ENCODE measurements at regions of chr7 and their contacts with region 1.

Region 1: DNA sequence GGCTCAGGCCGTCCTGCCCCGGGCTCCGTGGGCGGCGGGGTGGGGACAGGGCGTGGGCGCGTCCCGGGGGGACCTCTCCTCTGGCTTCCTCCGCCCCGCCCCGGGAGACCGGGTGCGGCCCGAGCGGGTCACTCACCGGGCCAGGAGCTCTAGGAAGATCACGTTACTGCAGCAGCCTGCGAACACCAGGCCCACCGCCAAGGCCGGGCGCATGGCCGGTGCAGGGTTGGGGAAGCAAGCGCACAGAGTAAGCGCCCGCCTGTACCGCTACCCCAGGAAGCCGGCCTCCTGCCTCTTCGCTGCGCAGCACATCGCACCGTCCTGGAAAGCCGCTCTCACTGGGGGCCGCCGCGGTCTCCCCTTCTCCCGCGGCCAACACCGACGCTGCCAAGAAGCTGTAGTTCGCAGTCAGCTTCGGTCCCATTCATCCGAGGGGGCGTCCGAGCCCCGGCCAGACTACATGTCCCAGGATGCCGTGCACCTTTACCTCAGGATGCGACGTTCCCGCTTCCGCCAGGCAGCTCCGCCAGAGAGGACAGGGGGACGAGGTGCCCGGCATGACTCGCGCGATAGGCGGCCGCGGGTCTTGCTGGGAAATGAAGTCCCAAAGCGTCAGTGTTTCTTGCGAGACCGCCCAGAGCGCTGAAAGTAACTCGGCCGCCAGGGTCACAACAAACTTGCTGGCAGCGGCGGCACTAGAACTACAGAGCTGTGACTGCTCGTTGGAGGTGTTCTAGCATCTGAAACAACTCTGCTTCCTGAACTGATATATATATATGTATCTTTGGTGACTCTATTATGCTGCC is at the start of gene SLC35B4:
- DNase-seq: peak; percentile 88 to 97 (median 94)
- ATAC-seq: peak; percentile 97
- H3K4me3 ChIP-seq: peak within 1 kb of the TSS; percentile 88 to 98
- H3K4me3 Mint-ChIP-seq: peak within 1 kb of the TSS; percentile 97
- H3K27ac ChIP-seq: peak within 1 kb of the TSS; percentile 58 to 72
- H3K27ac Mint-ChIP-seq: peak within 1 kb of the TSS; percentile 92
- H3K4me1 ChIP-seq: peaks cover 14% of the 10 kb centered on the region
- H3K4me1 Mint-ChIP-seq: peaks cover 25% of the 10 kb centered on the region
- H3K27me3 ChIP-seq: no peaks in the 10 kb centered on the region
- H3K27me3 Mint-ChIP-seq: peaks cover 3% of the 10 kb centered on the region
- CTCF ChIP-seq: peak; percentile 29
- total RNA-seq, gene SLC35B4: 5.1 to 7.0 TPM

Region 2: DNA sequence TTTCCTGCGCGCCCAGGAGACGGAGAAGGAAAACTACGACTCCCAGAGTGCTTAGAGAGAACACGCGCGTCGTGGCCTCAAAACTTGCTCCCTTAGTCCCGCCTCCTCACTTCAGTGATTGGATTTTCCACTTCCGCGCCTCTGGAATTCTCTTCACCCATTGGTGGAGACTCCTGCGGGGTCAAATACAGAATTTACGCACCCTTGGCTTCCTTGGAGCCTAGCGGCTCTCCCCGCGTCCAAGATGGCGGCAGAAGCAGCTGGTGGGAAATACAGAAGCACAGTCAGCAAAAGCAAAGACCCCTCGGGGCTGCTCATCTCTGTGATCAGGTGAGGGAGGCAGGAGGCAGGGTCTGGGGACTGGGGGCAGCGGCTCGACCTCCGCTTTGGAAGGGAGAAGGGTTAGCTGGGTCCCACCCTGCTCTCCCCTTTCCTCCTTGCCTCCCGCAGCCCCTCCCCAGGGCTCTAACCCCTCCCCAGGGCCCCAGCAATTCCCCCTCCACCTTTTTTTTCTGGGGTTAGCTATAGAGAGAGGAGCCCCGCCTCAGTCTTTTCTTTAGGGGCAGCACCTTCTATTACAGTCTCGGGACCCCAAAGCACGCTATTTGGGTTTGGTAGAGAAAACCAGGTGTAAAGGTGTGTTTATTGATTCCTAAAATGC is 1063.8 kb before region 1 on chr7 and contains the start of gene EXOC4:
- CTCF ChIA-PET with region 1: no interaction called
- POLR2A ChIA-PET with region 1: interaction called, 5 read pairs
- intact Hi-C with region 1: loop called (anchors 1 to 2 kb)
- DNase-seq: peak; percentile 82 to 98 (median 89)
- ATAC-seq: peak; percentile 99
- H3K4me3 ChIP-seq: peak within 1 kb of the TSS; percentile 88
- H3K4me3 Mint-ChIP-seq: peak within 1 kb of the TSS; percentile 96
- H3K27ac ChIP-seq: peak within 1 kb of the TSS; percentile 83 to 92
- H3K27ac Mint-ChIP-seq: peak within 1 kb of the TSS; percentile 96
- H3K4me1 ChIP-seq: peaks cover 15% of the 10 kb centered on the region
- H3K4me1 Mint-ChIP-seq: peaks cover 44% of the 10 kb centered on the region
- H3K27me3 ChIP-seq: no peaks in the 10 kb centered on the region
- H3K27me3 Mint-ChIP-seq: no peaks in the 10 kb centered on the region
- CTCF ChIP-seq: no peak
- total RNA-seq, gene EXOC4: 47.9 to 50.5 TPM

Region 3: DNA sequence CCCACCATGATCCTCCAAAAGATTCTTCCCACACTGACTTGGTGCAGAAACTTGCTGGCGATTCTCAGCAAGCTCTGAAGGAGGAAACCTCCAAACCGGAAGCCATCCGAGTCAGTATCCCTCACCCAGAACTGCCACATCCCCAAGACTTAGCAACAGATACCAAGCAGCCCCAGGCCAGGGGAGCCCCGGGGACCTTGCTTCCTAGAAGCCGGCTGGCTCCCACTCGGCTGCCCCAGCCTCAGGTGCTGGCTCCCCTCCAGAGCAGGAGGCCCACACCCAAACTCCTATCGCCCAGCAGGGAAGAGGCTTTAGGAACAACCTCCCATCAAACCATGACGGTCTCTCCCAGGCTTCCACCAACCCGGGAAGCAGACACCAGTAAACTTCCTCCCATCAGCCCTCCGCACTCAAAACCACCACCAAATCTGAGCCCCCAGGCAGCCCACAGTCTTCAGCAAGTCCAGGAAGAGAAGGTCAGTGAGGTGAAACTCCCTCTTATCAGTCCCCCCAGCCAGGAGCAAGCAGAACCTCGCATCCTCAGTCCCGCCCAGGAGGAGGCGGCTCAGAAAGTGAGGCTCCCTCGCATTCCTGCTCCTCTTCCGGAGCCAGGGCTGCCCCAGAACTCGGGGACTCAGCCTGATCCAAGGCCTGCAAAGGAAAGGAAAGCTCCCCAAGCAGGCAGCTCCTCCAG is 107.3 kb before region 1 on chr7:
- CTCF ChIA-PET with region 1: no interaction called
- POLR2A ChIA-PET with region 1: no interaction called
- intact Hi-C with region 1: no loop called
- DNase-seq: no peak
- ATAC-seq: no peak
- H3K4me3 ChIP-seq: no peak overlapping the region
- H3K4me3 Mint-ChIP-seq: no peak overlapping the region
- H3K27ac ChIP-seq: no peak overlapping the region
- H3K27ac Mint-ChIP-seq: no peak overlapping the region
- H3K4me1 ChIP-seq: no peaks in the 10 kb centered on the region
- H3K4me1 Mint-ChIP-seq: no peaks in the 10 kb centered on the region
- H3K27me3 ChIP-seq: no peaks in the 10 kb centered on the region
- H3K27me3 Mint-ChIP-seq: peaks cover 4% of the 10 kb centered on the region
- CTCF ChIP-seq: no peak

Region 4: GRCh38 chr7:134458806-134459698 is 142.3 kb after region 1 on chr7 and contains the start of gene AKR1B1:
- CTCF ChIA-PET with region 1: no interaction called
- POLR2A ChIA-PET with region 1: interaction called, 5 read pairs
- intact Hi-C with region 1: loop called (anchors 1 to 5 kb)
- DNase-seq: peak; percentile 75 to 93 (median 87)
- ATAC-seq: peak; percentile 88
- H3K4me3 ChIP-seq: peak within 1 kb of the TSS; percentile 75 to 85
- H3K4me3 Mint-ChIP-seq: peak within 1 kb of the TSS; percentile 83
- H3K27ac ChIP-seq: peak within 1 kb of the TSS; percentile 63 to 74
- H3K27ac Mint-ChIP-seq: peak within 1 kb of the TSS; percentile 76
- H3K4me1 ChIP-seq: peaks cover 36% of the 10 kb centered on the region
- H3K4me1 Mint-ChIP-seq: peaks cover 47% of the 10 kb centered on the region
- H3K27me3 ChIP-seq: no peaks in the 10 kb centered on the region
- H3K27me3 Mint-ChIP-seq: no peaks in the 10 kb centered on the region
- CTCF ChIP-seq: peak; percentile 72
- total RNA-seq, gene AKR1B1: 63.9 to 67.6 TPM

Region 5: DNA sequence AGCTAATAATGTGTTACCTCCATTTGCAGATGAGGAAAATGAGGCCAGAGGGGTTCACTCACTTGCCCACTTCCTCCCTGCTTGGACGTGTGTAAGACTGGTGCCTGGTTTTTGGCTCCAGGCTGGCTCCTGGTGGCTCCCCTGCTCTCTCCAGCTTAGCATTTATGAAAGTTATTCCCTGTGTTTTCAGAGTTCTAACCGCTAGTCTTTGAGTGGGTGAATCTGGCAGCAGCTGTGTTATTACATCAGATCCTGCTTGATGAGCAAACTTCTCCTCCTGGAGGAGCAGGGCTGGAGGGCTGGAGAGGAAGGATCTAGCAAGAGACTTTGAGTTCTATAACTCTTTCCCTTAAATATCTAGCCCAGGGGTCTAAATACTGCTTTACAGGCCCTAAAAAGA is 588.6 kb after region 1 on chr7:
- CTCF ChIA-PET with region 1: no interaction called
- POLR2A ChIA-PET with region 1: no interaction called
- intact Hi-C with region 1: no loop called
- DNase-seq: no peak
- ATAC-seq: no peak
- H3K4me3 ChIP-seq: no peak overlapping the region
- H3K4me3 Mint-ChIP-seq: no peak overlapping the region
- H3K27ac ChIP-seq: no peak overlapping the region
- H3K27ac Mint-ChIP-seq: no peak overlapping the region
- H3K4me1 ChIP-seq: no peaks in the 10 kb centered on the region
- H3K4me1 Mint-ChIP-seq: no peaks in the 10 kb centered on the region
- H3K27me3 ChIP-seq: no peaks in the 10 kb centered on the region
- H3K27me3 Mint-ChIP-seq: peaks cover 4% of the 10 kb centered on the region
- CTCF ChIP-seq: no peak

Region 6: DNA sequence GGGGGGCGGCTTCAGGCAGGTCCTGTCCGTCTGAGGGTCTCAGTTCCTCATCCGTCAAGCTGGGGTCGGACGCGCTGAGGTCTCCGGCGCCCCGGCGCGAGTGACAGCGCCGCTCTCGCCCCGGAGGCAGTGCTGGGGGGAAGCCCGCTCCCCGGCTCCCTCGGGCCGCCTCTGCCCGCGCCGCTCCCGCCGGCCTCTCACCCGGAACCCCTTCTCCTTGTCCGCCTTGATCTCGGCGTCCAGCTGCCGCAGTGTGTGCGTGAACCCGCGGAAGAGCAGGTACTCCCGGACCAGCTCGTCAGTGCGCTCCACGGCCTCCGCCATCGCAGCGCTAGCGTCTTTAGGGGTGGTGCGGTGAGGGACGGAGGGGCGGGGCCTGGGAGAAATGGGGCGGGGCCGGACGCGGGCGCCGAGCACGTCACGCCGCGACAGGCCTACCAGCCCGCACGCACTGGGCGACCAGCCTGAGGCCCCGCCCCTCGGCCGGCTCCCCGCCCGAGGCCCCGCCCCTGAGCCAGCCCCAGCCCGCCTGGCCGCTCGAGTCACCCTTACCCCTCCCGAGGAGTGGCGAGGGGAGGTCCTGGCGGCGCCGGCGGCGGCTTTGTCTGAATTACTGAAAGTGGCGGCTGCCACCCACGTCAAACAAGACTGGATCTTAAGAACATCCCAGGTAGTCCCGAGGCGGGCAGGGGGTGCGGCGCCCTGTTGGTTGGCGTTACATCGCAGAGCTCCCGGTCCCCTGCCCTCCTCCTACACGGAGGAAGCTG is 894.6 kb after region 1 on chr7 and contains the start of gene WDR91:
- CTCF ChIA-PET with region 1: no interaction called
- POLR2A ChIA-PET with region 1: no interaction called
- intact Hi-C with region 1: loop called (anchors 2 to 5 kb)
- DNase-seq: peak; percentile 95 to 98 (median 96)
- ATAC-seq: peak; percentile 93
- H3K4me3 ChIP-seq: peak within 1 kb of the TSS; percentile 74 to 91
- H3K4me3 Mint-ChIP-seq: peak within 1 kb of the TSS; percentile 97
- H3K27ac ChIP-seq: peak within 1 kb of the TSS; percentile 80 to 91
- H3K27ac Mint-ChIP-seq: peak within 1 kb of the TSS; percentile 99
- H3K4me1 ChIP-seq: peaks cover 12% of the 10 kb centered on the region
- H3K4me1 Mint-ChIP-seq: peaks cover 42% of the 10 kb centered on the region
- H3K27me3 ChIP-seq: no peaks in the 10 kb centered on the region
- H3K27me3 Mint-ChIP-seq: no peaks in the 10 kb centered on the region
- CTCF ChIP-seq: no peak
- total RNA-seq, gene WDR91: 43.3 to 46.6 TPM

Region 7: GRCh38 chr7:135558337-135558767 is 1241.6 kb after region 1 on chr7:
- CTCF ChIA-PET with region 1: no interaction called
- POLR2A ChIA-PET with region 1: no interaction called
- intact Hi-C with region 1: loop called in 1 of 2 experiments (anchors 2 kb)
- DNase-seq: peak; percentile 37 to 87 (median 68)
- ATAC-seq: peak; percentile 52
- H3K4me3 ChIP-seq: peak overlapping the region; percentile 85 to 86
- H3K4me3 Mint-ChIP-seq: no peak overlapping the region
- H3K27ac ChIP-seq: peak overlapping the region; percentile 90 to 98
- H3K27ac Mint-ChIP-seq: no peak overlapping the region
- H3K4me1 ChIP-seq: peaks cover 16% of the 10 kb centered on the region
- H3K4me1 Mint-ChIP-seq: peaks cover 17% of the 10 kb centered on the region
- H3K27me3 ChIP-seq: no peaks in the 10 kb centered on the region
- H3K27me3 Mint-ChIP-seq: no peaks in the 10 kb centered on the region
- CTCF ChIP-seq: peak; percentile 52

Region 8: GRCh38 chr7:135977007-135977741 is 1660.4 kb after region 1 on chr7 and contains the start of gene MTPN:
- CTCF ChIA-PET with region 1: no interaction called
- POLR2A ChIA-PET with region 1: no interaction called
- intact Hi-C with region 1: loop called (anchors 2 to 5 kb)
- DNase-seq: peak; percentile 94 to 98 (median 98)
- ATAC-seq: peak; percentile 81
- H3K4me3 ChIP-seq: peak within 1 kb of the TSS; percentile 89 to 93
- H3K4me3 Mint-ChIP-seq: peak within 1 kb of the TSS; percentile 92
- H3K27ac ChIP-seq: peak within 1 kb of the TSS; percentile 82 to 88
- H3K27ac Mint-ChIP-seq: peak within 1 kb of the TSS; percentile 93
- H3K4me1 ChIP-seq: peaks cover 71% of the 10 kb centered on the region
- H3K4me1 Mint-ChIP-seq: peaks cover 79% of the 10 kb centered on the region
- H3K27me3 ChIP-seq: no peaks in the 10 kb centered on the region
- H3K27me3 Mint-ChIP-seq: no peaks in the 10 kb centered on the region
- CTCF ChIP-seq: no peak
- total RNA-seq, gene MTPN: 91.9 to 101 TPM